Activated CD4-positive, alpha-beta T cell treated with anti-CD3 and anti-CD28 coated beads, Interleukin-2, amount 10 ng/mL, durations not matched to agents 24 days and 14 days (primary cell): ENCODE measurements at regions of chr12 and their contacts with region 1.

Region 1: DNA sequence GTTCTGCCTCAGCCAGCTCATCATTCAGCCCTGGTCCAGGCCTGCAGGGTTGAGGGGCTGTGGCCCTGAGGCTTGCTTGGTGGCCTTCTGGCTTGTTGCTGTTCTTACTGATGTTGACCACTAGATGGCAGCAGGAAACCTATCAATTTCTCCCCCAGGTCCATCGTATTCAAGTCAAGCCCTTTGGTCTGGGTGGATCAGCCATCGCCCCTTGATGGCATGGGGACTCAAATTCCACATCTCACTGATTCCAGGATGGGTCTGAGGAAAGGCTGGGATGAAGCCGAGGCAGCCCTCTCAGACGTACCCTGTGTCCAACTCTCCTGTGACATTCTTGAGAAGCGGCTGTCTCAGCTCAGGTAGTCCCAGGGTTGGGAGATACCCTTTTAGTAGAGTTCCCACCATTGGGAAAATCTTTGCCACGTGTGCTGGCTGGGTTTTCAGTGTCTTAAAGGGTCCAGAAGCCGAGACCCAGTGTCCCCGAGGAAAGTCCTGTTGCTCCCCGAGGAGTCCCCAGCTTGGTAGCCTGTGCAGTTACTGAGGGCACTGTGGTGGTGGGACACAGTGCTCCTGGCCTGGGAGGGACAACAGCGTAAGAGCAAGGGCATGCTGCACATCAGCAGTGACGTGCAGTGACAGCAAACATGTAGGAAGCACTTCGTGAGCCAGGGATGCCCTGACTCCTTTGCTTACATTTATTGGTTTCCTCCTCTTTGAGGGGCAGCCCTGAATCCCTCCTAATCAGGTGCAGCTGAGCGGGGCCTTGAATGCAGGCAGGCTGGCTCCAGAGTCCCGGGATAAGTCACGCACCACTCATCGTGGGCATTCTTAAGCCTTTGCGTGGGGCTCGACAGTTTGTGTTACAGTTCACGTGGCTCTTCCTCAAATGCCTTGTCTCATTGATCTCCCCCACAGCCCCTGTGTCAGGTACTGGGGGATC is 58.6 kb downstream of the TSPAN9 start:
- DNase-seq: peak; percentile 79
- H3K4me3 Mint-ChIP-seq: no peak overlapping the region
- H3K27ac Mint-ChIP-seq: no peak overlapping the region
- H3K4me1 Mint-ChIP-seq: no peaks in the 10 kb centered on the region
- H3K27me3 Mint-ChIP-seq: peaks cover 18% of the 10 kb centered on the region

Region 2: DNA sequence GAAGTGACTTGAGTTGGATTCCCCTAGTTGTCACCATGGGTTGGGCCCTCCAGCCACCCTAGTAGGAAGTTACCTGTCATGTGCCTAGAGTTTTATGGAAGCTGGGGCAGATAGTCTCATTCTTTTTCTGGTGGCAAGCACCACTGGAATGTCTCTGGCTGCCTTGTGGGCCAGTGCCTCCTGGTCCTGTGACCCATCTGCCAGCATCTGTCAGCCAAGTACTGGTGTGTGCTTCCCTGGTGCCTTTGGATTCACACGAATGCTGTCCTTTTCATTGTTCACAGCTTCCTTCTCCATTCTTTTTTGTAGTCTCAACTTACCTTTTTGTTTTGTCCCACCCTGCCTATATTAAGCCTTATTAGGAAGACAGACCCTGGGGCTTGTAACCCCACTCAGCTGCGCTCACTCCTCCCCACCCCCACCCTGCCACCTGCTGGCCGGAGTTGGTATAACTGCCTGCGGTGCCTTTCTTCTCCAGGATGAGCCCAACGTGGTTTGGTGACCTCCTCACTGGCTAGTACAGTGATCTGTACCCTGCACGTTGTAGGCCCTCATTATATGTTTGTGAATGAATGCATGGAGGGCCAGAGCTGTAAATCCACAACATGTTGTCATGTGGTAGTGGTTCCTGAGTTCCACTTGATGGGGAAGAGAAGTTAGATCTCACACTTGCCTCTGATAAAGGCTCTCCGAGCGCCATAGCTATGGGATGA is 67.1 kb after region 1 on chr12:
- intact Hi-C with region 1: loop called (anchors 1 kb)
- DNase-seq: peak; percentile 85
- H3K4me3 Mint-ChIP-seq: no peak overlapping the region
- H3K27ac Mint-ChIP-seq: no peak overlapping the region
- H3K4me1 Mint-ChIP-seq: no peaks in the 10 kb centered on the region
- H3K27me3 Mint-ChIP-seq: peaks cover 39% of the 10 kb centered on the region

Region 3: GRCh38 chr12:3261782-3262359 is 126.1 kb after region 1 on chr12:
- intact Hi-C with region 1: no loop called
- DNase-seq: no peak
- H3K4me3 Mint-ChIP-seq: no peak overlapping the region
- H3K27ac Mint-ChIP-seq: no peak overlapping the region
- H3K4me1 Mint-ChIP-seq: no peaks in the 10 kb centered on the region
- H3K27me3 Mint-ChIP-seq: no peaks in the 10 kb centered on the region

Region 4: GRCh38 chr12:3275171-3276041 is 139.6 kb after region 1 on chr12:
- intact Hi-C with region 1: loop called (anchors 1 kb)
- DNase-seq: peak; percentile 92
- H3K4me3 Mint-ChIP-seq: no peak overlapping the region
- H3K27ac Mint-ChIP-seq: no peak overlapping the region
- H3K4me1 Mint-ChIP-seq: no peaks in the 10 kb centered on the region
- H3K27me3 Mint-ChIP-seq: peaks cover 5% of the 10 kb centered on the region